Activated CD4-positive, alpha-beta memory T cell treated with anti-CD3 and anti-CD28 coated beads for 36 hours (primary cell): ENCODE measurements at regions of chr13 and their contacts with region 1.

Region 1: GRCh38 chr13:48334534-48335127 is 31.1 kb downstream of the RB1 start:
- DNase-seq: no peak
- H3K4me3 Mint-ChIP-seq: no peak overlapping the region
- H3K27ac Mint-ChIP-seq: no peak overlapping the region
- H3K4me1 Mint-ChIP-seq: peaks cover 5% of the 10 kb centered on the region
- H3K27me3 Mint-ChIP-seq: no peaks in the 10 kb centered on the region

Region 2: GRCh38 chr13:48580185-48580803 is 245.7 kb after region 1 on chr13:
- CTCF ChIA-PET with region 1: interaction called, 189 read pairs
- POLR2A ChIA-PET with region 1: no interaction called
- intact Hi-C with region 1: loop called (anchors 1 kb)
- DNase-seq: peak; percentile 75
- H3K4me3 Mint-ChIP-seq: no peak overlapping the region
- H3K27ac Mint-ChIP-seq: no peak overlapping the region
- H3K4me1 Mint-ChIP-seq: peaks cover 4% of the 10 kb centered on the region
- H3K27me3 Mint-ChIP-seq: peaks cover 7% of the 10 kb centered on the region